Sigmoid colon (tissue), 7 donors: ENCODE measurements at regions of chr15 and their contacts with region 1.

Region 1: DNA sequence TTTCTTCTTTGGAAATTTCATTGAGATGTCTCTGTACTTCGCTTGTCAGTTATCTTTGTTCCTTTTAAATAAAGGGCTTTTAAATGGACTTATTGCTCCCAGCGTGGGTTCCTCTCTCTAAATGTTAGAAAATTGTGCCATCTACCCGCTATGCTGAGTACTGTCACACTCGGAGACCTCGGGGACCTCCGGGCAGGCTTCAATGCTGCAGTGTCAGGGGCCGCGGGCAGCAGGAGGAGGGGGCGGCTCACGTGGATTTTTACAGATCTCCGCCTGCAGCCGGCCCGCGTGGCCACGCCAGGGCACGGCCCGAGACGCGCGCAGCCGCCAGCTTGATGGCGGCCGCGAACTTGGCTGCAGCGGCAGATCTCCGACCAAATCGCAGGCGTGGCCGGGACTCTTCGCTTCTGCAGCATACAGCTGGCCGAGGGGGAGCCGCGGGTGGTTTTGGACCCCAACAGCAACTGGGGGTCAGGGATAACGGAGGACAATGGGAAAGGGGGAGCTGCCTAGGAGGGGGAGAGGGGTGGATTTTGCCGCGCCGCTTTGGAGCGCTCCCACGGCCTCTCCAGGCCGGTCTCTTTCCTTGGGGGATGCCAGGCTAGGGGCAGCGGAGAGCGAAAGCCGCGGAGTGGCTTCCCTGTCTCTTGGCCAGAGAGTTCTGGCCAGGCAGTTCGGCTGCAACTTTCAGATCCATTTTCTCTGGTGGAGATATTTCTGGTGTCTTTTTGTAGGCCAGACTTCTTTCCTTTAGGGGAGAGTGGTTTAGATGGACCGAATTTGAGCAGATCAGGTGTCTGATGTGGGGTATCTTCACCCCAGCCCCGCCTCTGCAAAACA is 15.3 kb downstream of the NR2F2 start:
- DNase-seq: peak; percentile 89
- H3K4me3 ChIP-seq: peak overlapping the region; percentile 36 to 56 (median 51)
- H3K27ac ChIP-seq: peak overlapping the region; percentile 92 to 97 (median 94)
- H3K4me1 ChIP-seq: peaks cover 0 to 75% (median 60%) of the 10 kb centered on the region in 4 donors
- H3K27me3 ChIP-seq: no peaks in the 10 kb centered on the region
- CTCF ChIP-seq: peak; percentile 41 to 59 (median 50)
- EP300 ChIP-seq: no peak
- POLR2A ChIP-seq: no peak

Region 2: DNA sequence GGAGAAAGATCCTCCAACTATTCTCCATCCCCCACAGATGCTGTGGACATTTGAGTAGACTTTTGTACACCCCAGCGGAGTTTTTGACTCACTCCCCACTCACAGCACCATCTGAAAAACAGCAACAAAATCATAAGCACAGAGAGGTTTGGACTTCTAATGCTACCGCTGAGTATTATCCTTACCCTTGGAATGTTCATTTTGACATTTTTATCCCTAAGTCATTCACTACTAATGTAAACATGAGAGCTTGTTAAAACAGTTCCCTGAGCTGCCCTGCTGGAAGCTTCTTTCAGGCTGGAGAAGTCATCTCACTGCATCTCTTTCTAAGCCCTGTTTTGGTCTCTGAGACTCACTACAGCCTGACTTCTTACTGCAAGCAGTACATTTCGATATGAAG is 1068.5 kb before region 1 on chr15:
- intact Hi-C with region 1: loop called (anchors 5 kb)
- DNase-seq: peak; percentile 67
- H3K4me3 ChIP-seq: no peak overlapping the region
- H3K27ac ChIP-seq: peak overlapping the region; percentile 72 to 83 (median 74)
- H3K4me1 ChIP-seq: peaks cover 0 to 47% (median 43%) of the 10 kb centered on the region in 4 donors
- H3K27me3 ChIP-seq: no peaks in the 10 kb centered on the region
- CTCF ChIP-seq: no peak
- EP300 ChIP-seq: peak in 1 of 4 donors; percentile 91
- POLR2A ChIP-seq: no peak